PC-3 (cell line): ENCODE measurements at regions of chr12 and their contacts with region 1.

Region 1: DNA sequence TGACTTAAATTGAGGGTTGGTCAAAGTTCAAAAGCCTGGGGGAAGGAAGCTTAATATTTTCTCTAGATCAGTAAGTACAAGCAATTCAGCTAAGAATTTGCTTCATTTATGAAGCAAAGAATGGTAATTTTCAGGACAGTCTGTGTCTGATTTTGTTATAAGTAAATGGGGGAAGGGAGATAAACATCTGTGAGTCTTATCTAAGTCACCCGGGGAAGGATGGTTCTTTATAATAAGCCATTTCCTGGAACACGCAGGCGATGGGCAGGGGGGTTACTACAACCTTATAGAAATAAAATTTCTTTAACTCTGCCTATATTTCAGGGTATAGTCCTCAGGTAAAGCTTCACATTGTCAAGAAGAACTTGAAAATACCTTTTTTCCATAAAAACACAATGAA is 42.9 kb downstream of the HELB start:
- DNase-seq: no peak
- ATAC-seq: no peak
- H3K4me3 ChIP-seq: no peak overlapping the region
- H3K27ac ChIP-seq: no peak overlapping the region
- H3K4me1 ChIP-seq: no peaks in the 10 kb centered on the region
- H3K27me3 ChIP-seq: no peaks in the 10 kb centered on the region
- CTCF ChIP-seq: no peak

Region 2: DNA sequence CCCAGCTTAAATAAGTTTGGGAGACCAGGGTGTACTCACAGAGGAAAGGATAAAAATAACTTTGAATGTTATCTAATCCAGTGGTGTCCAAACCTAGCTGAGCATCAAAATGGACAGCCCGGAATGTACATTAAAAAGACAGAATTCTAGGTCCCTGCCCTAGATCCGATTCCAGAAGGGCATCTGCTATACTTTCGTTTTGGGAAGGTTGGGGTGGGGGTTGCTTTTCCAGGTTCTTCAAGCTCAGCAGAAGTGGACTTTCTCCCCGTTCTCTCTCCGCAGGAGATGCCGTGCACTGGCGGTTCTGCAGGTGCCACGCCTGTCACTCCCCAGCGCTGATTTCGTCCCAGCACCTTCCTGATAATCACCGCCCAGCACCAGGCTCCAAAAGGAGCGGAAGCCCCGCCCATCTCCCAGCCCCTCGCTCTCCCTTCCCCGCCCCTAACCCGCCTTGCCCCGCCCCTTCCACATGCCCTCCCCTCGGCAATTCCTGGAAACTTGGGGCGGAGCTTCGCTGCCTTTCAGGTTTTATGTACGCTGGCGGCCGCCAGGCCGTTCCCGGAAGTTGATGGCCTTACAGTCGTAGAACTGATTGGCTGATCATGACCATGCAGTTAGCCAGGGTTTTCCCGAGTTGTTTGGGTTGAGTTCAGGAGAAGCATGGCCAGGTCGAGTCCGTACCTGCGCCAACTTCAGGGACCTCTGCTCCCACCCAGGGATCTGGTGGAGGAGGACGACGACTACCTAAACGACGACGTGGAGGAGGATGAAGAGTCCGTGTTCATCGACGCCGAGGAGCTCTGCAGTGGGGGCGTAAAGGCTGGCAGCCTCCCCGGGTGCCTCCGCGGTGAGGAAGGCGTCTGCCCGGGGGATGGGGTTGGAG is 43.0 kb before region 1 on chr12 and contains the start of gene HELB:
- CTCF ChIA-PET with region 1: interaction called, 16 read pairs
- POLR2A ChIA-PET with region 1: no interaction called
- intact Hi-C with region 1: no loop called
- DNase-seq: peak; percentile 98
- ATAC-seq: peak; percentile 92
- H3K4me3 ChIP-seq: peak within 1 kb of the TSS; percentile 98
- H3K27ac ChIP-seq: peak within 1 kb of the TSS; percentile 57
- H3K4me1 ChIP-seq: peaks cover 17% of the 10 kb centered on the region
- H3K27me3 ChIP-seq: no peaks in the 10 kb centered on the region
- CTCF ChIP-seq: no peak
- total RNA-seq, gene HELB: 2.1 and 2.7 TPM in 2 replicates

Region 3: DNA sequence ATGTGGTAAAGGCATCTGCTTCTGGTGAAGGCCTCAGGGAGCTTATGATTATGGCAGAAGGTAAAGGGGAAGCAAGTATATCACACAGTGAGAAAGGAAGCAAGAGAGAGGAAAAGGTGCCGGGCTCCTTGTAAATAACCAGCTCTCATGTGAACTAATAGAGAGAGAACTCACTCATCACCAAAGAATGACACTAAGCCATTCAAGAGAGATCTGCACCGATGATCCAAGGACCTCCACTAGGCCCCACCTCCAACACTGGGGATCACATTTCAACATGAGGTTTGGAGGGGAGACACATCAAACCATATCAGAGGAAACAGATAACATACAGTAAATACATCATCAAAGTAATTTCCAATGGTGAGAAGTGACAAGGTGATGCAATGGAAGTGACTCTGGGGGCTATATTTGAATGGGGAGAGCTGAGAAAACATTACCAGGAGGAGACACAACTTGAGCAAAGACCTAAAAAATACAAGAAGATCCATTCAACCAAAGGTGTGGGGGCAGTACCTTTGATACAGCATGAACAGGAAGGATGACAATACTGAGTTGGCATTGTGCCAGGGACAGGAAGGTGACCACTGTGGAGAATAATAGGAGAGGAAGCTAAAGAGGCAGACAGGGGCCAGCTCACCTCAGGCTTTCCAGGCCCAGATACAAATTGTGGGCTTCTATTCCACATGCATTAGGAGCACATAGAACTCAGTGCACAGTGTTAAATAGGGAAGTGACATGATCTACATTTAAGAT is 468.1 kb after region 1 on chr12:
- CTCF ChIA-PET with region 1: no interaction called
- POLR2A ChIA-PET with region 1: no interaction called
- intact Hi-C with region 1: no loop called
- DNase-seq: peak; percentile 65
- ATAC-seq: no peak; the same call in 1 of the 2 replicates
- H3K4me3 ChIP-seq: no peak overlapping the region
- H3K27ac ChIP-seq: no peak overlapping the region
- H3K4me1 ChIP-seq: peaks cover 10% of the 10 kb centered on the region
- H3K27me3 ChIP-seq: no peaks in the 10 kb centered on the region
- CTCF ChIP-seq: no peak